GM12878 (cell line): ENCODE measurements at regions of chr11 and their contacts with region 1.

Region 1: DNA sequence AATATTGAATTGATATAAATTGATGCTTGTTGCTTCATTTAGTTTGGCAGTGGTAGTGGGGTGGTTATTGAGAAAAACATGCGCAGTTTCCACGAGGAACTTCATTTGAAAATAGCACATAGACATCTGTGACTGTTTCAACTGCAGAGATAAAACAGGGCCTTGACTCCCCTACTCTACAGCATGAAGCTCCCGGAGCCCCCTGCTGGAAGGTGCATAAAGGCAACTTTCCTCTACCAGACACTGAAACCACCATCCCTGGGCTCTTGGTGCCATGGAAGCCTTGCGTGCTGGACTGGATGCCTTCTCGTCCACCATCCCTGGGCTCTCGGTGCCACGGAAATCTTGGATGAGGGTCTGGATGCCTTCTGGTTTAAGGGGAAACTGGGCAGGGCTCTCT is 195.9 kb downstream of the CSNK2A3 start:
- DNase-seq: no peak
- ATAC-seq: peak; percentile 73
- H3K4me3 ChIP-seq: no peak overlapping the region
- H3K27ac ChIP-seq: no peak overlapping the region
- H3K4me1 ChIP-seq: no peaks in the 10 kb centered on the region
- H3K27me3 ChIP-seq: no peaks in the 10 kb centered on the region; a peak in 1 of 4 replicates
- CTCF ChIP-seq: peak; percentile 30 to 52 (median 37); a peak in 5 of 6 replicates
- EP300 ChIP-seq: no peak
- POLR2A ChIP-seq: no peak
- RAD21 ChIP-seq: peak; percentile 40

Region 2: GRCh38 chr11:11171854-11172253 is 14.7 kb after region 1 on chr11:
- CTCF ChIA-PET with region 1: interaction called, 19 read pairs
- POLR2A ChIA-PET with region 1: no interaction called
- RAD21 ChIA-PET with region 1: interaction called, 7 read pairs
- SMC1A ChIA-PET with region 1: interaction called, 4 read pairs
- in situ Hi-C with region 1: no loop called
- intact Hi-C with region 1: no loop called
- DNase-seq: peak; percentile 61
- ATAC-seq: peak; percentile 95
- H3K4me3 ChIP-seq: no peak overlapping the region
- H3K27ac ChIP-seq: peak overlapping the region; percentile 39; the same call in 1 of the 2 replicates
- H3K4me1 ChIP-seq: peaks cover 33% of the 10 kb centered on the region
- H3K27me3 ChIP-seq: no peaks in the 10 kb centered on the region
- CTCF ChIP-seq: no peak
- EP300 ChIP-seq: 0 out of 4 replicates have a peak, but pooled peaks of 1 of the 2 experiments have one; percentile 16
- POLR2A ChIP-seq: no peak
- RAD21 ChIP-seq: no peak

Region 3: GRCh38 chr11:11370255-11370961 is 213.2 kb after region 1 on chr11:
- CTCF ChIA-PET with region 1: no interaction called
- POLR2A ChIA-PET with region 1: no interaction called
- RAD21 ChIA-PET with region 1: no interaction called
- SMC1A ChIA-PET with region 1: no interaction called
- in situ Hi-C with region 1: no loop called
- intact Hi-C with region 1: no loop called
- DNase-seq: no peak
- ATAC-seq: peak; percentile 62
- H3K4me3 ChIP-seq: no peak overlapping the region
- H3K27ac ChIP-seq: no peak overlapping the region
- H3K4me1 ChIP-seq: no peaks in the 10 kb centered on the region
- H3K27me3 ChIP-seq: no peaks in the 10 kb centered on the region
- CTCF ChIP-seq: no peak
- EP300 ChIP-seq: no peak
- POLR2A ChIP-seq: no peak
- RAD21 ChIP-seq: no peak